ENCODE measurements at regions of chr16 and their contacts with region 1.

Region 1: GRCh38 chr16:69424053-69424934 is at the start of gene CYB5B:
- DNase-seq: peak; percentile 86
- ATAC-seq: peak; percentile 96
- H3K4me3 Mint-ChIP-seq: peak within 1 kb of the TSS; percentile 99
- H3K27ac Mint-ChIP-seq: peak within 1 kb of the TSS; percentile 94
- H3K4me1 Mint-ChIP-seq: peaks cover 30% of the 10 kb centered on the region
- H3K27me3 Mint-ChIP-seq: no peaks in the 10 kb centered on the region
- total RNA-seq, gene CYB5B: 125 to 131 TPM

Region 2: DNA sequence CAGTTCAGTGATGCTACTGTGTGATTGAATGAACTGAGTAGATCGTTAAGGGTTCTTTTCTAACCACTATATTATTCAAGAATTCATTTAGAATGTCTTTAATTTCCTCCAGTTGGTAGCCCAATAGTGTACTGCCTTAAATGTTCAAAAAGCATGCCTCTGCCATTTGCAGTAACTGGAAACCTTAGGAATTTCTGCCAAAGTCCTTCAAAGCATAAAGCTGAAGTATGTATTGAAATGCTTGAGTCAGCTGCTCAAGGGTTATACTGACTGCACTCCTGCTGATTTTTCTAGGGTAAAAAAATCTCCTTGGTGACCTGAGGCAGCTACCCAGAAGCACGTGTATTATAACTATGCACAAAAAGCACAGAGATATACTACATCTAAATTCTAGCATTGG is 180.8 kb before region 1 on chr16:
- POLR2A ChIA-PET with region 1: no interaction called
- DNase-seq: no peak
- ATAC-seq: no peak
- H3K4me3 Mint-ChIP-seq: no peak overlapping the region
- H3K27ac Mint-ChIP-seq: no peak overlapping the region
- H3K4me1 Mint-ChIP-seq: peaks cover 3% of the 10 kb centered on the region
- H3K27me3 Mint-ChIP-seq: no peaks in the 10 kb centered on the region

Region 3: GRCh38 chr16:69412316-69412715 is 12.0 kb before region 1 on chr16:
- POLR2A ChIA-PET with region 1: interaction called, 11 read pairs
- DNase-seq: no peak
- ATAC-seq: no peak
- H3K4me3 Mint-ChIP-seq: no peak overlapping the region
- H3K27ac Mint-ChIP-seq: no peak overlapping the region
- H3K4me1 Mint-ChIP-seq: peaks cover 15% of the 10 kb centered on the region
- H3K27me3 Mint-ChIP-seq: no peaks in the 10 kb centered on the region

Region 4: GRCh38 chr16:69435977-69436820 is 11.9 kb after region 1 on chr16:
- POLR2A ChIA-PET with region 1: interaction called, 11 read pairs
- DNase-seq: no peak
- ATAC-seq: no peak
- H3K4me3 Mint-ChIP-seq: no peak overlapping the region
- H3K27ac Mint-ChIP-seq: no peak overlapping the region
- H3K4me1 Mint-ChIP-seq: peaks cover 31% of the 10 kb centered on the region
- H3K27me3 Mint-ChIP-seq: no peaks in the 10 kb centered on the region

Measured in activated naive CD8-positive, alpha-beta T cell treated with anti-CD3 and anti-CD28 coated beads, Interleukin-2, amount 10 ng/mL, durations not matched to agents 7 days and 5 days (primary cell).